ENCODE measurements at regions of chr1 and their contacts with region 1.

Region 1: GRCh38 chr1:154878371-154879022 is 8.4 kb upstream of the KCNN3 start:
- DNase-seq: peak; percentile 88

Region 2: GRCh38 chr1:154669464-154670282 is 208.8 kb before region 1 on chr1:
- intact Hi-C with region 1: loop called (anchors 1 kb)
- DNase-seq: peak; percentile 89

Region 3: DNA sequence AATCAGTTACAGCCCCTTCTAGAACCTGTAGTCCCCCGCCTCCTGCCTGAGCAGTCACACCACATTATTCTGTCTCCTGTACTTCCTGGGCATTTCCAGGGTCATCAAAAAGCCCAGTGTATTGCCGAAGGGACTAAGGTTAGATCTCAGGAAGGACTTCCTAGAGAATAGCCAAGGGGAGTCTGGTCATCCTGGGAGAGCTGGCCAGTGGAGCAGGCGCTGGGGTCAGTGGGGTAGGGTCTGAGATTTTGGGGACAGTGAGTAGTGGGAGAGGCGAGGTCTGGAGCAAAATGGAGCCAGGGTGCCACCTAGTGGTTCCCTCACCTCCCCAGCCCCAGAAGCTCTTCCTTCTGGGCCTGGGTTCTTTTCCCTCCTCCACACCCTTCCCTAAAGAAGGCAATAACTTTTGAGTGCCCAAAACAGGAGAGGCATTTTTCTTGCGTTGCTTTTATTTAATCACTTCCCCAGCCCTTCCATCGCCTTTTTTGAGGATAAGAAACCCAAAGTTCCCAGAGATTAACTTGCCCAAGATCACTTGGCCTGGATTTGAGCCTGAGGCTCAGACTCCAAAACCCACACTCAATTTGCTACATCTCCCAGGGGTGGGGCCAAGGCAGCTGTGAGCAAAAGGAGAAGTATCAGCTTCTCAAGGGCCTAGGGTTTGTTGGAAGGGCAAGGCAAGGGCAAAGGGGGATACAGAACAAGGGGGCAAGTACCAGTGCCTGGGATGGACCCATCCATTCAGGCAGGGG is 65.3 kb after region 1 on chr1:
- intact Hi-C with region 1: loop called (anchors 2 kb)
- DNase-seq: no peak

Region 4: GRCh38 chr1:155305881-155306391 is 427.4 kb after region 1 on chr1:
- intact Hi-C with region 1: no loop called
- DNase-seq: no peak